Endothelial cell of umbilical vein (primary cell): ENCODE measurements at regions of chr7 and their contacts with region 1.

Region 1: DNA sequence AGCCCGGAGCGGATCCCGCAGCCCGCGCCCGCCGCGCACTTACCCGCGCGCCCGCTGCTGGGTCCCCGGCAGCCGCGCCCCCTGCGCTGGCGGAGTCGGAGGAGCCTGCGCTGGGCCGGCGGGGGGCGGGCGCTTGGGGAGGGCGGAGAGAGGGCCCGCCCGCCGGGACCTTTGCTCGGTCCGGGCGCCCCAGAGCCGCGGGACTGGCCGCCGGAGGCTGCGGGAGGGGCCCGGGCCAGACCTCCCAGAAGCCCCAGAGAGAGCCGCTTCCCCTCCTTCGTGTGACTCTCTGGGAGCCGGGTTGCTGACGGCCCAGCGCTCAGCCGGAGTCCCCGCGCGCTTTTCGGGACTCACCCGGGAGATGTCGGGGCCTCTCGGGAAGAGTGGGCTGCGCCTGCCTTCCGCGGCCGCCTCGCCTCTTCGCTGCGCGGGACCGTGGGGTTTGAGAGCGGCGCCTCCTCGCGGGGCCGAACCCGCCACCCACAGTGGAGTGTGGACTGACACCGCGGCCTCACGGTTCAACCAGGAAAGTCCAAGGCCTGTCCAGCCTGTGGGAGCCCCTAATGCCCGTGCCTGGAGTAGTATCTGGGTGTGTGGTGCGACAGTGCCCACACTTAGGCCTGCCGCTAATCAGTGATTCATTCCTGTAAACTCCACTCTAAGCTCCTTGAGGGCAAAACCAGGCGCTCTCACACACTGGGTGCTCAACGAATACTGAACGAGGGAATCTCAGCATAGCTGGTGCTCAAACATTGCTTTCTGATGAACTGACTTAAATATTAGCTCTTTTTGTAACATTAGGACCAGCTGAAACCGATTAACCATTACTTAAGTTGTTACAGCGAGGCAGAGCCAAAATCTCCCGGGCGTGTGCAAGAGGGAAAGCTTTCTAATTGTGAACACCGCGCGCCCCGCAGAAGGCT is at the start of gene GSDME:
- DNase-seq: peak; percentile 62
- H3K4me3 ChIP-seq: peak within 1 kb of the TSS; percentile 55 to 77 (median 75)
- H3K27ac ChIP-seq: peak within 1 kb of the TSS; percentile 63
- H3K4me1 ChIP-seq: peaks cover 24% of the 10 kb centered on the region
- H3K27me3 ChIP-seq: peaks cover 3% of the 10 kb centered on the region in 2 experiments
- CTCF ChIP-seq: no peak
- POLR2A ChIP-seq: peak; percentile 69
- total RNA-seq, gene GSDME: 21.3 and 23.4 TPM in 2 replicates

Region 2: GRCh38 chr7:24366876-24367275 is 390.7 kb before region 1 on chr7:
- CTCF ChIA-PET with region 1: no interaction called
- POLR2A ChIA-PET with region 1: no interaction called
- dilution Hi-C with region 1: no loop called
- intact Hi-C with region 1: no loop called
- DNase-seq: no peak
- H3K4me3 ChIP-seq: no peak overlapping the region
- H3K27ac ChIP-seq: no peak overlapping the region
- H3K4me1 ChIP-seq: no peaks in the 10 kb centered on the region
- H3K27me3 ChIP-seq: no peaks in the 10 kb centered on the region
- CTCF ChIP-seq: no peak
- POLR2A ChIP-seq: no peak

Region 3: DNA sequence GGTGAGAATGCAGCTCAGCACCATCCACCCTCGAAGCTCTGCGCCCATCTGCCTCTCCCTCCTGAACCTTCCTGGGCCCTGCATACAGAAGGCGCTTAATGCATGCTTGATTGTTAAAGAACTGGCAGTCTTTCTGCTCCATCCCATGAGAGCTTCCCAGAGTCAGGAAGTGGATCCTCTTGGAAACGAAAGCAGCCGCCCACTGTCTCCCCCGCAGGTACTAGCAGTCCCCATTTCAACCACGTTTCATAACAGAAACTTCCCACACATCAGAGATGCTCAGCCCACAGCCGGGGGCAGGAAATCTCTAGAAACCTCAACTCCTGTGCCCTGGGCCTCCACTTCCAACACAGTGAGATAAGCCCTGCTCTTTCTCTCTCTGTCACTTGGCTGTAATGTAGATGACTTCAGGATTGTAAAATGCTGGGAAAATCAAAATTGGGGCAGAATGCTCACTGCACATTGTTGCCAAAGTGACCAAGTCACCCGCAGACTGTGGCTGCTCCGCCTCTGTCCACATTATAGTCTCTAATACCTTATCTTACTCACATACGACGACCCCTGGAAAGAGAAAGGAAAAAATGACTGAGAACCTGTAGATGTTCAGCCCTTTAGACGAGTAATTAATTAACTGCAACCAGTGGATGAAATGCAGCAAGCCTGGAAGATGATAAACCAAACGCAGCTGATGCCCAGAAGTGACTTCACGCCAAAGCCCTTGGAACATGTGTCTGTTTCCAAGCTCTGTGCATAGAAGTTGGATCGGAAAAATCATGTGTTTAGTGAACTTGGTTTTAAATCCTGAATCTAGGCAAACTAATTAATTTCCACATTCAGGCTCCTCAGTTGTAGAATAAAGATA is 28.9 kb before region 1 on chr7:
- CTCF ChIA-PET with region 1: interaction called, 3 read pairs
- POLR2A ChIA-PET with region 1: no interaction called
- dilution Hi-C with region 1: no loop called
- intact Hi-C with region 1: loop called (anchors 1 kb)
- DNase-seq: no peak
- H3K4me3 ChIP-seq: no peak overlapping the region
- H3K27ac ChIP-seq: no peak overlapping the region
- H3K4me1 ChIP-seq: peaks cover 16% of the 10 kb centered on the region
- H3K27me3 ChIP-seq: no peaks in the 10 kb centered on the region
- CTCF ChIP-seq: no peak
- POLR2A ChIP-seq: no peak

Region 4: GRCh38 chr7:24786941-24787340 is 29.3 kb after region 1 on chr7:
- CTCF ChIA-PET with region 1: interaction called, 3 read pairs
- POLR2A ChIA-PET with region 1: no interaction called
- dilution Hi-C with region 1: no loop called
- intact Hi-C with region 1: loop called (anchors 2 kb)
- DNase-seq: peak; percentile 72
- H3K4me3 ChIP-seq: no peak overlapping the region
- H3K27ac ChIP-seq: peak overlapping the region; percentile 84
- H3K4me1 ChIP-seq: peaks cover 7% of the 10 kb centered on the region
- H3K27me3 ChIP-seq: no peaks in the 10 kb centered on the region
- CTCF ChIP-seq: no peak
- POLR2A ChIP-seq: no peak